Activated naive CD4-positive, alpha-beta T cell treated with anti-CD3 and anti-CD28 coated beads for 36 hours (primary cell): ENCODE measurements at regions of chr5 and their contacts with region 1.

Region 1: DNA sequence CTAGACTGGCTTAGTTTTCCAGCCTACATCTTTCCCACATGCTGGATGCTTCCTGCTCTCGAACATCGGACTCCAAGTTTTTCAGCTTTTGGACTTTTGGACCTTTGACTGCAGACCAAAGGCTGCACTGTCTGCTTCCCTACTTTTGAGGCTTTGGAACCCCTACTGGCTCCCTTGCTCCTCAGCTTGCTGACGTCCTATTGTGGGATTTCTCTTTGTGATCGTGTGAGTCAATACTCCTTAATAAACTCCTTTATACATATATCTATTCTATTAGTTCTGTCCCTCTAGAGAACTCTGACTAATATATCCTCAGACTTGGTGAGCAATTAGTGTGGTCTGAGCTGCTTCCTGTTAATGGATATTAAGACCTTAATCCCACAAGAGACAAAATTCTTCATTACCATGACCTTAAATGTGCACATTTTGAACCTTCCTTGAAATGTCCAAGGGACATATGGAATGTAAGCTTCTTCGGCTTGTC is 752.9 kb downstream of the CDH18 start:
- DNase-seq: no peak
- H3K4me3 Mint-ChIP-seq: no peak overlapping the region
- H3K27ac Mint-ChIP-seq: no peak overlapping the region
- H3K4me1 Mint-ChIP-seq: no peaks in the 10 kb centered on the region
- H3K27me3 Mint-ChIP-seq: no peaks in the 10 kb centered on the region

Region 2: GRCh38 chr5:18772207-18772874 is 462.8 kb before region 1 on chr5:
- CTCF ChIA-PET with region 1: no interaction called
- intact Hi-C with region 1: loop called (anchors 10 kb)
- DNase-seq: peak; percentile 34
- H3K4me3 Mint-ChIP-seq: no peak overlapping the region
- H3K27ac Mint-ChIP-seq: no peak overlapping the region
- H3K4me1 Mint-ChIP-seq: peaks cover 6% of the 10 kb centered on the region
- H3K27me3 Mint-ChIP-seq: no peaks in the 10 kb centered on the region

Region 3: DNA sequence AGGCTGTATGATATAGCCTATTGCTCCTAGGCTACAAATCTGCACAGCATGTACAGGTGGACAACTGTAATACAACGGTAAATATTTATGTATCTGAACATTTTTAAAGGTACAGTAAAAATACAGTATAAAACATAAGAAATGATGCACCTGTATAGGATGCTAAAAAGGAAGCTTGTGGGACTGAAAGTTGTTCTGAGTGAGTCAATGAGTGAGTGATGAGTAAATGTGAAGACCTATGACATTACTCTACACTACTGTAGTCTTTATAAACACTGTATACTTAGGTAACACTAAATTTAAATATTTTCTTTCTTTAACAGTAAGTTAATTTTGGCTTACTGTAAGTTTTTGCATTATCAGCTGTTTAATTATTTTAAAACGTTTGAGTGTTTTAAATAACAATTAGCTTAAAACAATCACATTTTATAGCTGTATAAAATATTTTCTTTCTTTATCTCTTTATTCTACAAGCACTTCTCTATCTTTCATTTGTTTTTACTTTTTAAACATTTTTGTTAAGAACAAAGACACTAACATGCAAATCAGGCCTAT is 724.8 kb after region 1 on chr5:
- CTCF ChIA-PET with region 1: no interaction called
- intact Hi-C with region 1: no loop called
- DNase-seq: no peak
- H3K4me3 Mint-ChIP-seq: no peak overlapping the region
- H3K27ac Mint-ChIP-seq: no peak overlapping the region
- H3K4me1 Mint-ChIP-seq: no peaks in the 10 kb centered on the region
- H3K27me3 Mint-ChIP-seq: no peaks in the 10 kb centered on the region